Right lobe of liver (tissue), 6 donors: ENCODE measurements at regions of chr17 and their contacts with region 1.

Region 1: GRCh38 chr17:2054512-2055291 is at the start of gene HIC1:
- DNase-seq: peak; percentile 77 to 84 (median 83)
- ATAC-seq: peak; percentile 51 to 64 (median 64)
- H3K4me3 ChIP-seq: peak within 1 kb of the TSS; percentile 35 to 59 (median 49)
- H3K27ac ChIP-seq: peak within 1 kb of the TSS; percentile 50 to 89 (median 71)
- H3K4me1 ChIP-seq: peaks cover 0 to 42% (median 5%) of the 10 kb centered on the region in 4 donors
- H3K27me3 ChIP-seq: peaks cover 0 to 19% of the 10 kb centered on the region in 2 donors
- CTCF ChIP-seq: peak; percentile 90 to 97 (median 94)
- POLR2A ChIP-seq: peak; percentile 64
- total RNA-seq, gene HIC1: 4.7 to 14.8 (median 6.1) TPM

Region 2: DNA sequence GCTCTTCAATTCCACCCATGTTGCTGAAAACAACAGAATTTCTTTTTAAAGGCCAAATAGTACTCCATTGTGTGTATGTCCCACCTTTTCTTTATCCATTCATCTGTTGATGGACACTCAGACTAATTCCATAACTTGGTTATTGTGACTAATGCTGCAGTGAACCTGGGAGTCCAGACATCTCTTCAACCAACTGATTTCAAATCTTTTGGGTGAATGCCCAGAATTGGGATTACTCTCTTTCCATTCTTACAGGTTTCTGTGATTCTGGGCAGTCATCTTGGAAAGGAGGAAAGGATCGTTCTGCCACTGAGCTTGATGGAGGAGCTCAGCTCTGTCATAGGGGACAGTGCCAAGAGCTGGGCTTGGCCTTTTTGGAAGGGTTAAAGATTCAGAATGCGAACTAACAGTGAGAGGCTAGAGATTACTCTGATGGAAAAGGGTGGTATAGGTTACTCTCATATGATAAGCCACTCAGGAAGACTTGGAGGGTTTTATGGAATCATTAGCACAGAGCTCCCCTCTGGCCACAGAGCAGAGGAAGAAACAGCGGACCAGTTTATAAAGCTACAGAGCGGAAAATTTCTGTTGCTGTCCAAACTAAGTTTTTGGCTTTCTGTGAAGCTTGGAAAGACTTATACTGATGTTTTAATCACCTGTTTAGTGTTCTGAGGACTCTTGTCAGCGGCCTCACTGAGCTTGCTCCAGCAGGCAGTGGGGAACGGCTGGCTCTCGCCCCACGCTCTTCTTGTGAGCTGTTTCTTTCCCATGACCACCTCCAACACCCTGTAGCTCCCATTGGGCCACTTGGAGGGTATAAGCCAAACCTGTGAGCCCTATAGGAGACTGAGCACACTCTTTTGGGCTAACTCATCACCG is 48.5 kb after region 1 on chr17:
- intact Hi-C with region 1: no loop called
- DNase-seq: no peak
- ATAC-seq: no peak
- H3K4me3 ChIP-seq: no peak overlapping the region
- H3K27ac ChIP-seq: no peak overlapping the region
- H3K4me1 ChIP-seq: no peaks in the 10 kb centered on the region
- H3K27me3 ChIP-seq: no peaks in the 10 kb centered on the region
- CTCF ChIP-seq: no peak
- POLR2A ChIP-seq: no peak

Region 3: GRCh38 chr17:2192367-2193057 is 137.8 kb after region 1 on chr17:
- intact Hi-C with region 1: no loop called
- DNase-seq: no peak
- ATAC-seq: peak; percentile 14 to 23 (median 22)
- H3K4me3 ChIP-seq: no peak overlapping the region
- H3K27ac ChIP-seq: peak overlapping the region in 1 of 3 donors; percentile 2
- H3K4me1 ChIP-seq: peaks cover 0 to 3% (median 0%) of the 10 kb centered on the region in 4 donors
- H3K27me3 ChIP-seq: no peaks in the 10 kb centered on the region
- CTCF ChIP-seq: no peak
- POLR2A ChIP-seq: no peak

Region 4: DNA sequence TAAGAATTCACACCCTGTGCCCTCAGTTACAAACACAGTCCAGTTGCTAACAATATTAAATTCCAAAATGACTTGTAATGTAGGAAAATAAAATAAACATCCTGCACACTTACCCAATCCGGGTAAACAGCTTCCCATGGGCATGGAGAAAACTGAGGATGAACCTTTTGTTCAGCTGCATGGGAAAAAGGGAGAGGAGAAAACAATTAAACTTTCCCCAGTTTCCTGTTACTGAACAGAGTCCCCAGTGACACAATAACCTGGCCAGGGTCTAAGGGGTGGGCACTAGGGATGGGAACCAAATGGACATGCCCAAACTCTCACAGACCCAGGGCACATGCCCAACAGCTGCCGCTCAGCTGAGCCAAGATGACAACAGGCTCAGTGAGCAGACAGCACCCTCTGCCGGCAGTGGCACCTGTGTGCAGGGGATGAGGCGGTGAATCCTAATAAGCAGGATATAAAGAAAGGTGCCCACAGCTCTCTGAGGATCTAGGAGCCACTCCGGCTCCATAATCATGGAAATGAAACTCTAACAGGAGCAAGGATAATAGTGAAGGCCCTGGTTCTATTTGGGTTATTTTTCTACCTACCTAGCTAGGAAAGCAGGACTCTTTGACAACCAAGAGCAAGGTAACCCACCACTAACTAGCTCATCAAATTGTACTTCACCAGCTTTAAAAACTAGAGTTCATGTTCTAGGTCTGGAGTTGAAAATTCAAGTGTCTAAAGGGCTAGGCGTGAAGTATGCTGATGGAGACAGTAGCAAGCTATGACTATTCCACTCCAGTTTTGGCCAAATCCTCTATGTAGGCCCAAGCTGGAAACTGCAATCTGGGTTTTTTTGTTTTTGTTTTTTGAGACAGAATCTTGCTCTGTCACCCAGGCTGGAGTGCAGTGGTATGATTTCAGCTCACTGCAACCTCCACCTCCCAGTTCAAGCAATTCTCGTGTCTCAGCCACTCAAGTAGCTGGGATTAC is 190.1 kb after region 1 on chr17:
- intact Hi-C with region 1: loop called (anchors 5 to 10 kb)
- DNase-seq: peak; percentile 87 to 91 (median 89)
- ATAC-seq: peak; percentile 99 to 100 (median 100)
- H3K4me3 ChIP-seq: no peak overlapping the region
- H3K27ac ChIP-seq: peak overlapping the region in 1 of 3 donors; percentile 42
- H3K4me1 ChIP-seq: peaks cover 0 to 6% (median 1%) of the 10 kb centered on the region in 4 donors
- H3K27me3 ChIP-seq: no peaks in the 10 kb centered on the region
- CTCF ChIP-seq: peak; percentile 98 to 99 (median 98)
- POLR2A ChIP-seq: no peak